ENCODE measurements at regions of chr22 and their contacts with region 1.

Region 1: GRCh38 chr22:28829358-28830181 is 29.2 kb upstream of the XBP1 start:
- DNase-seq: peak; percentile 44 to 59
- ATAC-seq: peak; percentile 79 to 86
- H3K4me3 ChIP-seq: no peak overlapping the region
- H3K27ac ChIP-seq: no peak overlapping the region
- H3K4me1 ChIP-seq: no peaks in the 10 kb centered on the region
- H3K27me3 ChIP-seq: no peaks in the 10 kb centered on the region
- CTCF ChIP-seq: peak; percentile 92 to 98 (median 98)
- POLR2A ChIP-seq: no peak

Region 2: GRCh38 chr22:28609921-28610320 is 219.6 kb before region 1 on chr22:
- in situ Hi-C with region 1: no loop called
- intact Hi-C with region 1: no loop called
- DNase-seq: no peak
- ATAC-seq: no peak
- H3K4me3 ChIP-seq: no peak overlapping the region
- H3K27ac ChIP-seq: no peak overlapping the region
- H3K4me1 ChIP-seq: no peaks in the 10 kb centered on the region
- H3K27me3 ChIP-seq: no peaks in the 10 kb centered on the region
- CTCF ChIP-seq: no peak
- POLR2A ChIP-seq: no peak

Region 3: GRCh38 chr22:28791841-28792490 is 37.6 kb before region 1 on chr22:
- in situ Hi-C with region 1: no loop called
- intact Hi-C with region 1: loop called (anchors 2 kb)
- DNase-seq: no peak
- ATAC-seq: no peak
- H3K4me3 ChIP-seq: no peak overlapping the region
- H3K27ac ChIP-seq: peak overlapping the region in 1 of 4 donors; percentile 11
- H3K4me1 ChIP-seq: peaks cover 7 to 16% of the 10 kb centered on the region in 2 donors
- H3K27me3 ChIP-seq: no peaks in the 10 kb centered on the region
- CTCF ChIP-seq: no peak
- POLR2A ChIP-seq: no peak

Region 4: GRCh38 chr22:28855355-28856094 is 26.0 kb after region 1 on chr22:
- in situ Hi-C with region 1: no loop called
- intact Hi-C with region 1: no loop called
- DNase-seq: peak in 1 of 2 donors; percentile 24
- ATAC-seq: peak; percentile 68 to 73
- H3K4me3 ChIP-seq: no peak overlapping the region
- H3K27ac ChIP-seq: no peak overlapping the region
- H3K4me1 ChIP-seq: peaks cover 13% of the 10 kb centered on the region in 2 donors
- H3K27me3 ChIP-seq: no peaks in the 10 kb centered on the region
- CTCF ChIP-seq: peak; percentile 91 to 92 (median 92)
- POLR2A ChIP-seq: no peak